CD8-positive, alpha-beta T cell (primary cell): ENCODE measurements at regions of chr19 and their contacts with region 1.

Region 1: GRCh38 chr19:53333463-53334449 is at the start of gene ZNF845:
- DNase-seq: peak; percentile 93 to 98 (median 96)
- ATAC-seq: peak; percentile 98
- H3K4me3 ChIP-seq: peak within 1 kb of the TSS; percentile 81 to 98
- H3K4me3 Mint-ChIP-seq: peak within 1 kb of the TSS; percentile 92
- H3K27ac ChIP-seq: peak within 1 kb of the TSS; percentile 66 to 83
- H3K27ac Mint-ChIP-seq: peak within 1 kb of the TSS; percentile 81
- H3K4me1 ChIP-seq: no peaks in the 10 kb centered on the region
- H3K4me1 Mint-ChIP-seq: peaks cover 31% of the 10 kb centered on the region
- H3K27me3 ChIP-seq: peaks cover 0 to 4% of the 10 kb centered on the region in 2 experiments
- H3K27me3 Mint-ChIP-seq: peaks cover 3% of the 10 kb centered on the region
- CTCF ChIP-seq: no peak
- total RNA-seq, gene ZNF845: 10.9 to 11.7 TPM

Region 2: DNA sequence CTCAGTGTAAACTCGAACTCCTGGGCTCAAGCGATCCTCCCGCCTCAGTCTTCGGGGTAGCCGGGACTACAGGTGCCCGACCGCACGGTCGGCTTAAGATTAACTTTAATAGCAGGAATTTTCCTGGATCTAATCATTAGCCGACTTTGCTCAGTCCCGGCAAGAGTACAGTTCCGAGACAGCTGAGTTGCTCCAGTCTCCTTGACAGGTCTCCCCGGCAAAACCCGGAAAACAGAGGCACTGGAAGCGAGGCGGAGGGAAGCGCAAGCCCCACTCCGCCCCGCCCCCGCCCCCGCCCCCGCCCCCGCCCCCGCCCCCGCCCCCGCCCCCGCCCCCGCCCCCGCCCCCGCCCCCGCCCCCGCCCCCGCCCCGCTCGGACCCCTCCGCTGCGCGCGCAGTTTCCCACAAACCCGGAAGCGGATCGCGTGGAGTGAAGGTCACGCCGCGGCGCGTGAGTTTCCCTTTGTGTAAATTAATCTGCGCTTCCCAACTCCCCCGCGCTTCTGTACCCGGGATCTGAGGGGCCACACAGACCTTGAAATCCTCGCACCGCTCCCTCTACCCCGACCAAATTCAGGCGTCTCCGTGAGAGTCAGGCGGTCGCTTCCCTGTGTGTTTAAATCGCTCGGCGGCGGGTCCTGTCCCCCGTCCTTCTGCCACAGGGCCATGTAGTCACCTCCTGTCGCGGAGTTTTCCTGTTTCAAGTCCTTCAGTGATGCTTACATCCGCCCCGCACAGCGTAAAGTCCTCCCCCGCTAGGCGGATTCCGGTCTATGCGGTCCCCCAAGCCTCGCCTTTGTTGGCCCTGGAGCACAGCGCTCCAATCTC is 1036.8 kb before region 1 on chr19 and contains the start of gene ZNF480:
- CTCF ChIA-PET with region 1: no interaction called
- POLR2A ChIA-PET with region 1: no interaction called
- intact Hi-C with region 1: loop called in 1 of 2 experiments (anchors 5 kb)
- DNase-seq: peak; percentile 73 to 94 (median 89)
- ATAC-seq: peak; percentile 92
- H3K4me3 ChIP-seq: peak within 1 kb of the TSS; percentile 96 to 97
- H3K4me3 Mint-ChIP-seq: peak within 1 kb of the TSS; percentile 97
- H3K27ac ChIP-seq: peak within 1 kb of the TSS; percentile 93 to 98
- H3K27ac Mint-ChIP-seq: peak within 1 kb of the TSS; percentile 99
- H3K4me1 ChIP-seq: peaks cover 7% of the 10 kb centered on the region
- H3K4me1 Mint-ChIP-seq: peaks cover 20% of the 10 kb centered on the region
- H3K27me3 ChIP-seq: no peaks in the 10 kb centered on the region
- H3K27me3 Mint-ChIP-seq: no peaks in the 10 kb centered on the region
- CTCF ChIP-seq: no peak
- total RNA-seq, gene ZNF480: 7.8 to 9.1 TPM

Region 3: DNA sequence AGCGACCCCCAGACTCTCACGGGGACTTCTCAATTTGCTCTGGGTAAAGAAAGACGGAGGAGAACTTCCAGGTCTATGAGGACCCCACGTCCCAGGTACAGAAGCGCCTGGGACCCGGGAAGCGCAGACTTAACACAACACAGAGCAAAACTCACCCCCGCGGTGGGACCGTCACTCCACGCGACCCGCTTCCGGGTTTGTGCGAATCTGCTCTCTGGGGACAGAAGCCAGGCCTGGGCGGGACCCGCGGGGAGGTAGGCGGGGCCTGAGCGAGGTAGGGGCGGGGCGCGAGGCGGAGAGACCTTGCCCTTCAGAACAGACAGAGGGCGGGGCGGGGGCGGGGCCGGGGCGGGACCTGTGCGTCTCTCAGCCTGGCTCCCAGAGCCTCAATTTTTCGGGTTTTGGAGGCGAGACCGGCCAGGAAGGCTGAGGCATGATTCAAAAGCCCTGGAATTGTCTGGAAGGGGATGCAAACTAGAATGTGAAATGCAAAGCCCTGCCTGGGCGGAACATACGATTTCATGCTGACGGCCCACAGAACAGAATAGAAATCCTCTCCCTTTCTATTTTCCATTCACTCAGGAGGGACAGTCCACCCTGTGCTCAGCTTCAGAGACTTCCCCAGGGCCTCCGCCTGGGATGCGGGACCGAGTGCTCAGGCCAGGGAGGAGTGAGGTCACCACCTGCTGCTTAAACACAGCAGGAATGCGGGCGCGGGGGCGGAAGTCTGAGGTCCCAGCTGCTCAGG is 391.2 kb before region 1 on chr19:
- CTCF ChIA-PET with region 1: no interaction called
- POLR2A ChIA-PET with region 1: no interaction called
- intact Hi-C with region 1: loop called in 1 of 2 experiments (anchors 2 kb)
- DNase-seq: peak; percentile 91 to 97 (median 95)
- ATAC-seq: peak; percentile 99
- H3K4me3 ChIP-seq: peak overlapping the region; percentile 88 to 91
- H3K4me3 Mint-ChIP-seq: peak overlapping the region; percentile 95
- H3K27ac ChIP-seq: peak overlapping the region; percentile 66 to 86
- H3K27ac Mint-ChIP-seq: peak overlapping the region; percentile 93
- H3K4me1 ChIP-seq: peaks cover 7% of the 10 kb centered on the region
- H3K4me1 Mint-ChIP-seq: peaks cover 28% of the 10 kb centered on the region
- H3K27me3 ChIP-seq: no peaks in the 10 kb centered on the region
- H3K27me3 Mint-ChIP-seq: no peaks in the 10 kb centered on the region
- CTCF ChIP-seq: no peak

Region 4: GRCh38 chr19:53254411-53255341 is 79.1 kb before region 1 on chr19 and contains the start of gene ZNF677:
- CTCF ChIA-PET with region 1: no interaction called
- POLR2A ChIA-PET with region 1: interaction called, 3 read pairs
- intact Hi-C with region 1: loop called (anchors 1 to 2 kb)
- DNase-seq: peak; percentile 60 to 90 (median 82)
- ATAC-seq: peak; percentile 99
- H3K4me3 ChIP-seq: peak within 1 kb of the TSS; percentile 75 to 98
- H3K4me3 Mint-ChIP-seq: peak within 1 kb of the TSS; percentile 84
- H3K27ac ChIP-seq: peak within 1 kb of the TSS in 1 of 2 experiments; percentile 75
- H3K27ac Mint-ChIP-seq: peak within 1 kb of the TSS; percentile 81
- H3K4me1 ChIP-seq: peaks cover 11% of the 10 kb centered on the region
- H3K4me1 Mint-ChIP-seq: peaks cover 9% of the 10 kb centered on the region
- H3K27me3 ChIP-seq: no peaks in the 10 kb centered on the region
- H3K27me3 Mint-ChIP-seq: no peaks in the 10 kb centered on the region
- CTCF ChIP-seq: no peak
- total RNA-seq, gene ZNF677: 7.8 to 8.3 TPM

Region 5: GRCh38 chr19:53394974-53395839 is 61.5 kb after region 1 on chr19 and contains the start of gene ZNF765:
- CTCF ChIA-PET with region 1: no interaction called
- POLR2A ChIA-PET with region 1: interaction called, 6 read pairs
- intact Hi-C with region 1: loop called (anchors 1 kb)
- DNase-seq: peak; percentile 94 to 99 (median 97)
- ATAC-seq: peak; percentile 99
- H3K4me3 ChIP-seq: peak within 1 kb of the TSS; percentile 86 to 97
- H3K4me3 Mint-ChIP-seq: peak within 1 kb of the TSS; percentile 96
- H3K27ac ChIP-seq: peak within 1 kb of the TSS; percentile 78 to 84
- H3K27ac Mint-ChIP-seq: peak within 1 kb of the TSS; percentile 96
- H3K4me1 ChIP-seq: peaks cover 12% of the 10 kb centered on the region
- H3K4me1 Mint-ChIP-seq: peaks cover 36% of the 10 kb centered on the region
- H3K27me3 ChIP-seq: no peaks in the 10 kb centered on the region
- H3K27me3 Mint-ChIP-seq: no peaks in the 10 kb centered on the region
- CTCF ChIP-seq: peak; percentile 53
- total RNA-seq, gene ZNF765: 9.6 to 12.4 TPM

Region 6: DNA sequence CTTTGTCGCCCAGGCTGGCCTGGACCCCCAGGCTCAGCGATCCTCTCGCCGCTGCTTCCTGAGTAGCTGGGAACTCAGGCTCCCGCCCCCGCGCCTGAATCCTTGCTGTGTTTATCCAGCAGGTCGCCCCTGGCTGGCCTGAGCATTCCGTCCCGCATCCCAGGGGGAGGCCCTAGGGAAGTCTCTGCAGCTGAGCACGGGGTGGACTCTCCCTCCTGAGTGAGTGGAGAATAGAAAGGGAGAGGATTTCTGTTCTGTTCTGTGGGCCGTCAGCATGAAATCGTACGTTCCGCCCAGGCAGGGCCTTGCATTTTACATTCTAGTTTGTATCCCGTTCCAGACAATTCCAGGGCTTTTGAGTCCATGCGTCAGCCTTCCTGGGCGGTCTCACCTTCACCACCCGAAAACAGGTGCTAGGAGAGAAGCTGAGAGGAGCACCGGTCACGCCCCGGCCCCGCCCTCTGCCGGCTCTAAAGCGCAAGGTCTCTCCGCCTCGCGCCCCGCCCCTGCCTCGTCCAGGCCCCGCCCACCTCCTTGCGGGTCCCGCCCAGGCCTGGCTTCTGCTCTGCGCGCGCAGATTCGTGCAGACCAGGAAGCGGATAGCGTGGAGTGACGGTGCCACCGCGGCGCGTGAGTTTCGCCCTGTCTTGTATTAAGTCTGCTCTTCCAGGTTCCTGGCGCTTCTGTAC is 97.8 kb after region 1 on chr19 and contains the start of gene ZNF761:
- CTCF ChIA-PET with region 1: no interaction called
- POLR2A ChIA-PET with region 1: no interaction called
- intact Hi-C with region 1: loop called in 1 of 2 experiments (anchors 1 kb)
- DNase-seq: peak; percentile 95 to 100 (median 97)
- ATAC-seq: peak; percentile 99
- H3K4me3 ChIP-seq: peak within 1 kb of the TSS; percentile 71 to 85
- H3K4me3 Mint-ChIP-seq: peak within 1 kb of the TSS; percentile 98
- H3K27ac ChIP-seq: peak within 1 kb of the TSS; percentile 79 to 84
- H3K27ac Mint-ChIP-seq: peak within 1 kb of the TSS; percentile 97
- H3K4me1 ChIP-seq: peaks cover 11% of the 10 kb centered on the region
- H3K4me1 Mint-ChIP-seq: peaks cover 41% of the 10 kb centered on the region
- H3K27me3 ChIP-seq: no peaks in the 10 kb centered on the region
- H3K27me3 Mint-ChIP-seq: no peaks in the 10 kb centered on the region
- CTCF ChIP-seq: peak; percentile 47
- total RNA-seq, gene ZNF761: 8.4 to 9.2 TPM

Region 7: DNA sequence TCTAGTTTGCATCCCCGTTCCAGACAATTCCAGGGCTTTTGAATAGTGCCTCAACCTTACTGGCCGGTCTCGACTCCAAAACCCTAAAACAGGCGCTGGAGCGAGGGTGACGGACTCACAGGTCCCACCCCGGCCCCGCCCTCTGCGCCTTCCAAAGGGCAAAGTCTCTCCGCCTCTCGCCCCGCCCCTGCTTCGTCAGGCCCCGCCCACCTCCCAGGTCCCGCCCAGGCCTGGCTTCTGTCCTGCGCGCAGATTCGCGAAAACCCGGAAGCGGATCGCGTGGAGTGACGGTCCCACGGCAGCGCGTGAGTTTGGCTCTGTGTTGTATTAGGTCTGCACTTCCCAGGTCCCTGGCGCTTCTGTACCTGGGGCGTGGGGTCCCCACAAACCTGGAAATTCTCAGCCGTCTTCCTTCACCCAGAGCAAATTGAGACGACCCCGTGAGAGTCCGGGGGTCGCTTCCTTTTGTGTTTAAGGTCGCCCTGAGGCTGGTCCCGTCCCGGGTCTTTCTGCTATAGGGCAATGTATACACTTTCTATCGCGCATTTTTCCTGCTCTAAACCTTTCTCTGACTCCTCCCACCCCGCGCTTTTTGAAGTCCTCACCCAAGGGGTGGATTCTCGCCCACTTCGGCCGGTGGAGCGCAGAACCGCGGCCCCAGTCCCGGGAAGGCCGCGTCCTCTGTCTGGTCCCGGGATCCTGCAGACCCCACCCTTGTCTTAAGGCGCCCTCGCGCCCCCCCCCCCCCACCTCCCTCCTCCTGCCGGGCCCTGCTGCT is 133.9 kb after region 1 on chr19 and contains the start of gene ZNF813:
- CTCF ChIA-PET with region 1: no interaction called
- POLR2A ChIA-PET with region 1: no interaction called
- intact Hi-C with region 1: loop called (anchors 1 to 2 kb)
- DNase-seq: peak; percentile 93 to 98 (median 95)
- ATAC-seq: peak; percentile 98
- H3K4me3 ChIP-seq: peak within 1 kb of the TSS; percentile 73 to 91
- H3K4me3 Mint-ChIP-seq: peak within 1 kb of the TSS; percentile 92
- H3K27ac ChIP-seq: peak within 1 kb of the TSS; percentile 64 to 79
- H3K27ac Mint-ChIP-seq: peak within 1 kb of the TSS; percentile 89
- H3K4me1 ChIP-seq: peaks cover 7% of the 10 kb centered on the region
- H3K4me1 Mint-ChIP-seq: peaks cover 26% of the 10 kb centered on the region
- H3K27me3 ChIP-seq: no peaks in the 10 kb centered on the region
- H3K27me3 Mint-ChIP-seq: peaks cover 18% of the 10 kb centered on the region
- CTCF ChIP-seq: no peak
- total RNA-seq, gene ZNF813: 3.8 TPM